Heart right ventricle (tissue), 16 donors: ENCODE measurements at regions of chr13 and their contacts with region 1.

Region 1: DNA sequence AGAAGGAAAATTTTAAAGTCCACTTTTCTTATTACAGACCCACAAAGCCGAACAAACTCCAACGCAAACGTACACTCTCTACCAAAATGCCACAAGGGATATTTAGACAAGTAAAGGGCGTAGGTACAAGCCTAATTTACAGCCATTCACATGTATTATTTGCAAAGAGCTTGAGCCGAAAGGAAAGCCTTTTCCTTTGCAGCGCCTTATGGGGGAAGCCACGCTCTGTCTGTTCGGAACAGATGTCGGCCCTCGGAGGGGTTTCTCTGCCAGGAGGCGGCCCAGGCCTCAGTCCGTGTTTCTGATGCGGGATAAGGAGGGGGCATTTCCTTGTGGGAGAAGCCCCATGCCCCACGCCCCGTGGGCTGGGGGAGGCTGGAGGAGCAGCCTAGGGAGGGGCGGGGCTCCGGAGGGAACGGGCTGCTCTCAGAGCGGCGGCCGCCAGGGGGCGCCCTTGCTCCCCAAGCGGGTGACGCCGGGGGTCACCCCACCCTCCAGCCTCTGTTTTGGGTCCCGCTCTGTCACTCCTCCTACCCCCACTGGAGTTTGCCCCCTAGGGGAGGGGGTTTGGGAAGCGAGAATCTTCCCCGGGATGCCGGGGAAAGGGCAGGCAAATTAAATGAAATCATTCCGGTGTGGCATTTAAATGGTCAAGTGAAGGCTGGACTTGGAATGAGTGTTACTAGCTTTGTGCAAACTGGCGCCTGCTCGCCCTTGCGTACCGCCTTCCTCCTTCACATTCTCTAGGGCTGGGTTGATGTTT is 2.9 kb downstream of the HTR2A start:
- DNase-seq: peak; percentile 44 to 73
- ATAC-seq: peak; percentile 90 to 95 (median 94)
- H3K4me3 ChIP-seq: peak overlapping the region; percentile 38 to 69 (median 59)
- H3K27ac ChIP-seq: peak overlapping the region in 4 of 10 donors; percentile 13 to 40 (median 17)
- H3K4me1 ChIP-seq: peaks cover 0 to 25% (median 12%) of the 10 kb centered on the region in 9 donors
- H3K27me3 ChIP-seq: peaks cover 0 to 56% (median 22%) of the 10 kb centered on the region in 7 donors
- CTCF ChIP-seq: peak; percentile 79 to 97 (median 96)

Region 2: GRCh38 chr13:46571189-46571908 is 322.6 kb before region 1 on chr13:
- intact Hi-C with region 1: loop called in 1 of 10 experiments (anchors 10 kb)
- DNase-seq: no peak
- ATAC-seq: peak in 6 of 8 donors; percentile 48 to 66 (median 60)
- H3K4me3 ChIP-seq: no peak overlapping the region
- H3K27ac ChIP-seq: peak overlapping the region in 5 of 10 donors; percentile 9 to 51 (median 36)
- H3K4me1 ChIP-seq: peaks cover 21 to 93% (median 71%) of the 10 kb centered on the region in 9 donors
- H3K27me3 ChIP-seq: no peaks in the 10 kb centered on the region
- CTCF ChIP-seq: no peak